OCI-LY7 (cell line): ENCODE measurements at regions of chr1 and their contacts with region 1.

Region 1: GRCh38 chr1:27525296-27526272 is 35.6 kb upstream of the WASF2 start:
- DNase-seq: peak; percentile 87
- H3K4me3 ChIP-seq: peak overlapping the region; percentile 60
- H3K27ac ChIP-seq: peak overlapping the region; percentile 74
- H3K4me1 ChIP-seq: peaks cover 65% of the 10 kb centered on the region
- CTCF ChIP-seq: no peak

Region 2: DNA sequence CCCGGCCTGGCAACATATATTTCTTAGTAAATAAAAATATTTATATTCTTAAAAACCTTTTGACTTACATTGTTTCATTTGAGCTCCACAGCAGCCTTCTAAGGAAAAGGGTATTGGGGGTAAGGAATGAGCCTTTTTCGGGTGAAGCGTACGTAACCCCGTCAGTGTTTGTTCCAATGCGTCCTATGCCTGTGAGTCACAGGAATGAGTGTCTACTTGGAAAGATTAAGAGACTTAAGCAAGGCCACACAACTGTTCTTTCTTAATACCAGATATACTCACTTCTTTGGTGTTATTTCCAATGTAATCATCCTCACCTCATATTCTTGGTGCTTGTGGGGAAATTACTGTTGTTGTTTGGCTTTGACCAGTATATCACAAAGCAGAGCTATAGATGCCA is 268.4 kb before region 1 on chr1:
- CTCF ChIA-PET with region 1: no interaction called
- POLR2A ChIA-PET with region 1: no interaction called
- intact Hi-C with region 1: no loop called
- DNase-seq: no peak
- H3K4me3 ChIP-seq: no peak overlapping the region
- H3K27ac ChIP-seq: no peak overlapping the region
- H3K4me1 ChIP-seq: peaks cover 17% of the 10 kb centered on the region
- CTCF ChIP-seq: no peak

Region 3: DNA sequence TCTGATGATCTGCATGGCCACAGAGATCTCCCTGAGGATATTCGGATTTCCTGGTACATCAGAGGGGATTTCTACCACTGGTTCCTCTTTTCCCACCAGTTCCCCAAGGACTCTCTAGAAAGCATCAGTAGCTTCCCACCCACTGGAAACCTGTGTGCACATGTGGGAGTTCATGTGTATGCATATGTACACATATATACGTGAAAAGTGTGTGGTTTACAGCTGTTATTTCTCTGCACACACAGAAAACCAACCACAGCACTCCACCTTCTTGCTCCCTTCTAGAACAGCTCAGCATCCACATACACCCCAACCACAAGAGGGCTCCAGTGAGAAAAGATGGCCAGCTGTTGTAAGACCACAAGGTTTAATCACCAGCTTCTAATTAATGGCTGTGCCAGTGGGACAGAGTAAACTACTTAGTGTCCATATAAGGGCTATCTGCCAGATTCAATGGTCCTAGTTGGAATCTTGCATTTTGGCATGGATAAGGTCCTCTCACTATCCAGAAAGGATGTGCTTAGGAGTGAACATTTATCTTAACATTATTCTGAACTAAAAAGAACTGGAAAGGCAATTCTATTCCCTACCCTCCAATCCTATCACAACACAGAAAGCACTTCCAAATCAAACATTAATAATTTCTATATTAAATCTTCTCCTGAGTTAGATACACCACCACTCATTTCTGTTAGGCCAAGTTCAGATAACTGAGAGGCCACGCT is 109.0 kb before region 1 on chr1:
- CTCF ChIA-PET with region 1: interaction called, 3 read pairs
- POLR2A ChIA-PET with region 1: no interaction called
- intact Hi-C with region 1: loop called (anchors 5 kb)
- DNase-seq: peak; percentile 81
- H3K4me3 ChIP-seq: no peak overlapping the region
- H3K27ac ChIP-seq: peak overlapping the region; percentile 25
- H3K4me1 ChIP-seq: peaks cover 34% of the 10 kb centered on the region
- CTCF ChIP-seq: peak; percentile 95

Region 4: GRCh38 chr1:27543284-27543683 is 17.7 kb after region 1 on chr1:
- CTCF ChIA-PET with region 1: no interaction called
- POLR2A ChIA-PET with region 1: no interaction called
- intact Hi-C with region 1: no loop called
- DNase-seq: no peak
- H3K4me3 ChIP-seq: no peak overlapping the region
- H3K27ac ChIP-seq: no peak overlapping the region
- H3K4me1 ChIP-seq: no peaks in the 10 kb centered on the region
- CTCF ChIP-seq: no peak

Region 5: GRCh38 chr1:27689423-27690173 is 164.0 kb after region 1 on chr1:
- CTCF ChIA-PET with region 1: no interaction called
- POLR2A ChIA-PET with region 1: no interaction called
- intact Hi-C with region 1: no loop called
- DNase-seq: no peak
- H3K4me3 ChIP-seq: no peak overlapping the region
- H3K27ac ChIP-seq: no peak overlapping the region
- H3K4me1 ChIP-seq: no peaks in the 10 kb centered on the region
- CTCF ChIP-seq: no peak